ENCODE measurements at regions of chr10 and their contacts with region 1.

Region 1: DNA sequence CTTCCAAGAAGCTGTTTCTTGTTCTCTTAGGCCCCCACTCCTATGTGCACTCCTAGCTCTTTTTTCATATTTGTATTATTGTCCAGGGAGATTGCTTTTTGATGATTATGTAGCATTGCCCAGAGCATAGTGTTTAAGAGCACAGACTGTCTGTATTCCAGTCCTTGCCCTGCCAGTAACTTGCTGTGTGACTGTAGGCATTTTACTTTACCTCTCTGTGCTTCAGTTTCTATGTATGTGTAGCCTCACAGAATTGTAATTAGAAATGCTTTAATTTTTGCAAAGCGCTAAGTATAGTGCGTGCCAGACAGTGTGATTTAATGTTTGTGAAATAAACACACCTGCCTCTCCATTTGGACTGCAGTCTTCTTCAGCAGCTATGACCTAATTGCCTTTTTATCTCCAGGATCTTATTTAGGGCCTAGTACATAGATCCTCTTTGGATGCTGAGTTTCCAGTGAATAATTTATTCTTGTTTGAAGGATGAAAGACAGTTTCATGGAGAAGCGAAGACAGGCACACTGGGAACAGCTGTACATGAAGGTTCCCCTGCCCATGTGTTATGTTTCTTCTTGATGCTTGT is 1.4 kb downstream of the SEC23IP start:
- DNase-seq: no peak
- ATAC-seq: no peak
- H3K4me3 ChIP-seq: peak overlapping the region; percentile 89 to 100
- H3K27ac ChIP-seq: peak overlapping the region; percentile 14; the same call in 1 of the 2 replicates
- H3K4me1 ChIP-seq: peaks cover 33% of the 10 kb centered on the region
- H3K27me3 ChIP-seq: no peaks in the 10 kb centered on the region
- CTCF ChIP-seq: no peak

Region 2: GRCh38 chr10:118775478-118775877 is 1118.5 kb before region 1 on chr10:
- CTCF ChIA-PET with region 1: no interaction called
- POLR2A ChIA-PET with region 1: no interaction called
- in situ Hi-C with region 1: no loop called
- intact Hi-C with region 1: no loop called
- DNase-seq: no peak
- ATAC-seq: no peak
- H3K4me3 ChIP-seq: no peak overlapping the region
- H3K27ac ChIP-seq: no peak overlapping the region
- H3K4me1 ChIP-seq: no peaks in the 10 kb centered on the region
- H3K27me3 ChIP-seq: no peaks in the 10 kb centered on the region
- CTCF ChIP-seq: no peak

Region 3: GRCh38 chr10:119872860-119873681 is 20.9 kb before region 1 on chr10:
- CTCF ChIA-PET with region 1: no interaction called
- POLR2A ChIA-PET with region 1: interaction called, 11 read pairs
- in situ Hi-C with region 1: no loop called
- intact Hi-C with region 1: no loop called
- DNase-seq: peak; percentile 57
- ATAC-seq: peak; percentile 97
- H3K4me3 ChIP-seq: peak overlapping the region; percentile 79 to 82
- H3K27ac ChIP-seq: peak overlapping the region; percentile 90
- H3K4me1 ChIP-seq: peaks cover 28% of the 10 kb centered on the region
- H3K27me3 ChIP-seq: no peaks in the 10 kb centered on the region
- CTCF ChIP-seq: no peak

Measured in Panc1 (cell line).